Lower lobe of right lung (tissue), 2 donors: ENCODE measurements at regions of chr20 and their contacts with region 1.

Region 1: DNA sequence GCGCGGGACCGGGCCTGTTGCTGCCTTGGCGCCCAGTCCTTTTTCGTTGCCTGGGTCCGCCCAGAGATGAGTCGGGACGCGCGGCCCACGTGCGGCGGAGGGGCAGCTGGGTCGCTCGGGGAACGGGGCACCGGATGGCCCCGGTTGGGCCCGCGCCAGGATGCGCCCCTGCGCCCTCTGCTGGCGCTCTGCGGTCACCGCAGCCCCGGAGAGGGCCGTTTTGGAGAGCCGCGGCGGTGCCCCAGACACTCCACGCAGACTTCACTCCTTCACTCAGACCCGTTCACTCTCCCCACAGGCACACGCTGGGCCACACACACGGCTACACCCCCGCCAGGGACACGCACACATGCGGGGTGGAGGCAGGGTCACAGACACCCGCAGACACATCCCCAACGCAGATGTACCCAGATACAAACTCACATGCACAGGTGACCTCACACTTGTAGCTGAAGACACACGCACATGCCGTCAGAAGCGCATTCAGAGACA is 38.8 kb downstream of the SRC start:
- DNase-seq: peak; percentile 80
- ATAC-seq: peak; percentile 80 to 89
- H3K4me3 ChIP-seq: peak overlapping the region; percentile 52
- H3K27ac ChIP-seq: no peak overlapping the region
- H3K4me1 ChIP-seq: peaks cover 16% of the 10 kb centered on the region
- H3K27me3 ChIP-seq: no peaks in the 10 kb centered on the region
- CTCF ChIP-seq: peak; percentile 94

Region 2: GRCh38 chr20:37209661-37210314 is 174.9 kb before region 1 on chr20:
- intact Hi-C with region 1: no loop called
- DNase-seq: no peak
- ATAC-seq: no peak
- H3K4me3 ChIP-seq: no peak overlapping the region
- H3K27ac ChIP-seq: no peak overlapping the region
- H3K4me1 ChIP-seq: no peaks in the 10 kb centered on the region
- H3K27me3 ChIP-seq: no peaks in the 10 kb centered on the region
- CTCF ChIP-seq: no peak

Region 3: GRCh38 chr20:37265152-37265551 is 119.6 kb before region 1 on chr20:
- intact Hi-C with region 1: loop called (anchors 10 kb)
- DNase-seq: no peak
- ATAC-seq: peak; percentile 34 to 48
- H3K4me3 ChIP-seq: no peak overlapping the region
- H3K27ac ChIP-seq: no peak overlapping the region
- H3K4me1 ChIP-seq: no peaks in the 10 kb centered on the region
- H3K27me3 ChIP-seq: peaks cover 6% of the 10 kb centered on the region
- CTCF ChIP-seq: no peak